Activated CD4-positive, alpha-beta memory T cell treated with anti-CD3 and anti-CD28 coated beads, Interleukin-2, amount 10 ng/mL, durations not matched to agents 7 days and 5 days (primary cell): ENCODE measurements at regions of chr3 and their contacts with region 1.

Region 1: DNA sequence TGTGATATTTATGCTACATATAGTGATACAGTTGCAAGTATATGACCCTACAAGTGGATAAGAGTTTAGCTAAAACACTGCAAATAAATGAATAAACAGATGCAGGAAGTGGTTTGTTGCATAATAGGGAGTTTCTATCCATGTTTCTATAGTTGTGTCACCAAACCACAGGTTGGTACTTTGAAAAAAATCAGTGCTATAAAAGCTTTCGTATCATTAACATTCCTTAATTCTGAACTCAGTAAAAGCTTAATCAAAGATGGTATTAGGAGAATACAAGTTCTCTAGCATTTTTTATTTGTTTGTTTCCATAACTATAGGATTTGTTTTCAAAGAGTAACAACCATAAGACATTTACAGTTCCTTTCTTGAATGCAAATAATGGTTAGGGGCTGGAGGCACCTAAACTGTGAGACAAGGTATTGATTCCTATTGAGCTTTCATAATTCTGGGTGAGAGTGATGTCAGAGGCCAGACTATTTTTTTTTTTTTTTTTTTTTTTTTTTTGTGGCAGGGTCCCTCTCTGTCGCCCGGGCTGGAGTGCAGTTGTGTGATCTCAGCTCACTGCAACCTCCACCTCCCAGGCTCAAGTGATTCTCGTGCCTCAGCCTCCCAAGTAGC is 29.6 kb downstream of the CPOX start:
- DNase-seq: no peak
- H3K4me3 Mint-ChIP-seq: peak overlapping the region; percentile 50
- H3K27ac Mint-ChIP-seq: peak overlapping the region; percentile 90
- H3K4me1 Mint-ChIP-seq: peaks cover 91% of the 10 kb centered on the region
- H3K27me3 Mint-ChIP-seq: no peaks in the 10 kb centered on the region

Region 2: GRCh38 chr3:98376631-98377030 is 187.1 kb before region 1 on chr3:
- CTCF ChIA-PET with region 1: no interaction called
- POLR2A ChIA-PET with region 1: no interaction called
- DNase-seq: no peak
- H3K4me3 Mint-ChIP-seq: no peak overlapping the region
- H3K27ac Mint-ChIP-seq: no peak overlapping the region
- H3K4me1 Mint-ChIP-seq: peaks cover 6% of the 10 kb centered on the region
- H3K27me3 Mint-ChIP-seq: peaks cover 3% of the 10 kb centered on the region

Region 3: DNA sequence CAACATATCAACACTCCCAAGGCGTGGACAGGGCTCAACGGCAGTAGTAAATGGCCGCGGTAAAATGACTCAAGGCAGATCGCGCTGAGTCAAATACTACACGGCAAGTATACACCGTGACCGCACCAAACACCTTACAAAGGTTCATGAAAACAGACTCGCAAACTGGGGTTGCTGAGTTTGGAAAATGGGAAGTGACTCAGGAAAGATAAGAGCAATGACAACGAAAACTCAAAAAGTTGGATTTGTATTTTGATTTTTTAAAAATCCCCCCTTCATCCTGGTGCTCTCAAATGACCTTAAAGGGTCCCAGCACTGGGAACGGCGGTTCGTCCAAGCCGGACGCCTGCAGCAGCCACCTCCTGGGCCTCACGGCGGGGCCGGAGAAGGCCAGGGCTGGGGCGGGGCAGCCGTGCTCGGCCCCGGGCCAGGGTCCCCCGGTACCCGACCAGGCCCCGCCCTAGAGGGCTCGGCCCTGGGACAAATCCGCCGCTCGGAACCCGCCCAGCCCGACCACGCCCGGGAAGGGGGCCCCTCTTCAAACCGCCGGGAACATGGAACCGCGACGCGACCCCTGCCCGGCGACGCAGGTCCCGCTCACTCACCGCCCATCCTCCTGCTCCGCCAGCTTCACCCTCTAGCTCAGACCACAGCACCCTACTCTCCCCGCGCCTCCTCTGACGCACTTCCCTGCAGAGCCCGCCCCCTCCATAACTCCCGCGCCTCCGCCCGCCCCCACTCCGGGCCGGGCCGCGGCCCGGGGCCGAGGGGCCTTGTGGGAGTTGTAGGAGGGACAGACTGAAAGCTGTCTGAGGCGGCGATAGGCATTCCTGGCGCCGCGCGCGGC is 41.3 kb before region 1 on chr3 and contains the start of gene CLDND1:
- CTCF ChIA-PET with region 1: interaction called, 21 read pairs
- POLR2A ChIA-PET with region 1: interaction called, 372 read pairs
- DNase-seq: peak; percentile 98
- H3K4me3 Mint-ChIP-seq: peak within 1 kb of the TSS; percentile 98
- H3K27ac Mint-ChIP-seq: peak within 1 kb of the TSS; percentile 92
- H3K4me1 Mint-ChIP-seq: peaks cover 74% of the 10 kb centered on the region
- H3K27me3 Mint-ChIP-seq: no peaks in the 10 kb centered on the region
- total RNA-seq, gene CLDND1: 673 to 683 TPM

Region 4: DNA sequence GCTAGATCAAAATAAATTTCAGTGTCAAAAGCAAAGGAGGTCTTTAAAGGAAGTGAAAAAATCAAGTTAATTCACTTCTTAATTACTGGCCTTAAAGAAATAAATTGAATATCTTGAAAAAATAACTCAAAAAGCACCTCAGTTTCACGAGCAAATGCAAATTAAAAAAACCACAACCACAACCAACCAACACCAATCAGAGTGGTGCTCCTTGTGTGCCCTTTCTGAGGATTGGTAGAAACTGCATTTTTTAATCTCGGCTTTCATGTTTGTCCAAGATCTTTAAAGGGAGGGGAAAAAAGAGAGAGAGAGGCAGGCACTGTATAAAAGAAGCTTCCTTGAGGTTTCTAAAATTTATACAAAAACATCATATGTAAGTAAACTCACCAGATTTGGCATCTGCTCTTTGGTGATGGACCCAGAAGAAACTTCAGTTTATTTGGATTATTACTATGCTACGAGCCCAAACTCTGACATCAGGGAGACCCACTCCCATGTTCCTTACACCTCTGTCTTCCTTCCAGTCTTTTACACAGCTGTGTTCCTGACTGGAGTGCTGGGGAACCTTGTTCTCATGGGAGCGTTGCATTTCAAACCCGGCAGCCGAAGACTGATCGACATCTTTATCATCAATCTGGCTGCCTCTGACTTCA is 32.0 kb before region 1 on chr3 and contains the start of gene GPR15:
- CTCF ChIA-PET with region 1: interaction called, 15 read pairs
- POLR2A ChIA-PET with region 1: interaction called, 931 read pairs
- DNase-seq: no peak
- H3K4me3 Mint-ChIP-seq: peak within 1 kb of the TSS; percentile 81
- H3K27ac Mint-ChIP-seq: peak within 1 kb of the TSS; percentile 84
- H3K4me1 Mint-ChIP-seq: peaks cover 64% of the 10 kb centered on the region
- H3K27me3 Mint-ChIP-seq: no peaks in the 10 kb centered on the region
- total RNA-seq, gene GPR15: 111 TPM

Region 5: GRCh38 chr3:98540346-98540745 is 23.4 kb before region 1 on chr3:
- CTCF ChIA-PET with region 1: interaction called, 15 read pairs
- POLR2A ChIA-PET with region 1: interaction called, 931 read pairs
- DNase-seq: no peak
- H3K4me3 Mint-ChIP-seq: peak overlapping the region; percentile 23
- H3K27ac Mint-ChIP-seq: peak overlapping the region; percentile 80
- H3K4me1 Mint-ChIP-seq: peaks cover 71% of the 10 kb centered on the region
- H3K27me3 Mint-ChIP-seq: no peaks in the 10 kb centered on the region

Region 6: GRCh38 chr3:98545940-98546339 is 17.8 kb before region 1 on chr3:
- CTCF ChIA-PET with region 1: interaction called, 6 read pairs
- POLR2A ChIA-PET with region 1: interaction called, 931 read pairs
- DNase-seq: no peak
- H3K4me3 Mint-ChIP-seq: peak overlapping the region; percentile 58
- H3K27ac Mint-ChIP-seq: peak overlapping the region; percentile 94
- H3K4me1 Mint-ChIP-seq: peaks cover 72% of the 10 kb centered on the region
- H3K27me3 Mint-ChIP-seq: no peaks in the 10 kb centered on the region